GM12878 (cell line): ENCODE measurements at regions of chr10 and their contacts with region 1.

Region 1: GRCh38 chr10:65754100-65754499 is 1171.7 kb upstream of the LRRTM3 start:
- DNase-seq: no peak
- ATAC-seq: no peak
- H3K4me3 ChIP-seq: no peak overlapping the region
- H3K27ac ChIP-seq: no peak overlapping the region
- H3K4me1 ChIP-seq: no peaks in the 10 kb centered on the region
- H3K27me3 ChIP-seq: no peaks in the 10 kb centered on the region
- CTCF ChIP-seq: no peak
- EP300 ChIP-seq: no peak
- POLR2A ChIP-seq: no peak
- RAD21 ChIP-seq: no peak

Region 2: DNA sequence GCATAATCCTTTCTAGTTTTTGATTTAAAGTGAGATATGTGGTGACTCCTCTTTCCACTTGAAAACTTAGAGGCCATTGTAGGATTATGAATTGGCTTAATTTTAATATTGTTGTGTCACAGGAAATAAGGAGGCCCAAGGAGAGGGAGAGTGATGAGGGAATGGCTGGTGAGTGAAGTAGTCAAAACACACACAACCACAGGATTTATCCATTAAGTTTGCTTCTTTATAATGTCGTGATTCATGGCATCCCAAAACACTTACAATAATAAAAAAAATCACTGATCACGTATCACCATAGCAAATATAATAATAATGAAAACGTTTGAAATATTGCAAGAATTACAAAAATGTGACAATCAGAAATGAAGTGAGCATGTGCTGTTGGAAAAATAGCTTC is 43.8 kb before region 1 on chr10:
- CTCF ChIA-PET with region 1: no interaction called
- POLR2A ChIA-PET with region 1: no interaction called
- RAD21 ChIA-PET with region 1: no interaction called
- SMC1A ChIA-PET with region 1: no interaction called
- in situ Hi-C with region 1: no loop called
- intact Hi-C with region 1: no loop called
- DNase-seq: no peak
- ATAC-seq: no peak
- H3K4me3 ChIP-seq: no peak overlapping the region
- H3K27ac ChIP-seq: no peak overlapping the region
- H3K4me1 ChIP-seq: no peaks in the 10 kb centered on the region
- H3K27me3 ChIP-seq: no peaks in the 10 kb centered on the region
- CTCF ChIP-seq: no peak
- EP300 ChIP-seq: no peak
- POLR2A ChIP-seq: no peak
- RAD21 ChIP-seq: no peak

Region 3: DNA sequence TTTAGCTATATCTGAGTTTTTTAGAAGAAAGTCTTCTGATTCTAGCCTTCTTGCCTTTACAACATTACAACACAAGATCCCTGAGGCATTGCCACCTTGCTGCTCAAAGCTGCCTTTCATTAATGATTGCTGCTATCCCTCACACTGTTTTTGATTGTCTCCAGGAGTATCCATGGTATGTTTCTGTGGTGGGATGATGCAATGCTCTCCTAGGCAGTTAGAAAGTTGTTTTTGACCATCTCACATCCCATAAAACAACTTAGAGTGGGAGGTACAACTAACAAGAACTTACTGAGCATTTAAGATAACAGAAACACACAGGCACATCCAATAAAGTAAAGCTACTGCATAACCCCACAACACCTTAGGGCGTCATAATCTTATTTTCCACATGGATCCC is 15.7 kb after region 1 on chr10:
- CTCF ChIA-PET with region 1: interaction called, 12 read pairs
- POLR2A ChIA-PET with region 1: no interaction called
- RAD21 ChIA-PET with region 1: no interaction called
- SMC1A ChIA-PET with region 1: interaction called, 8 read pairs
- in situ Hi-C with region 1: no loop called
- intact Hi-C with region 1: no loop called
- DNase-seq: no peak
- ATAC-seq: no peak
- H3K4me3 ChIP-seq: no peak overlapping the region
- H3K27ac ChIP-seq: no peak overlapping the region
- H3K4me1 ChIP-seq: no peaks in the 10 kb centered on the region
- H3K27me3 ChIP-seq: no peaks in the 10 kb centered on the region
- CTCF ChIP-seq: no peak
- EP300 ChIP-seq: no peak
- POLR2A ChIP-seq: no peak
- RAD21 ChIP-seq: no peak

Region 4: GRCh38 chr10:65864036-65864435 is 109.9 kb after region 1 on chr10:
- CTCF ChIA-PET with region 1: no interaction called
- POLR2A ChIA-PET with region 1: no interaction called
- RAD21 ChIA-PET with region 1: no interaction called
- SMC1A ChIA-PET with region 1: no interaction called
- in situ Hi-C with region 1: no loop called
- intact Hi-C with region 1: no loop called
- DNase-seq: no peak
- ATAC-seq: no peak
- H3K4me3 ChIP-seq: no peak overlapping the region
- H3K27ac ChIP-seq: no peak overlapping the region
- H3K4me1 ChIP-seq: no peaks in the 10 kb centered on the region
- H3K27me3 ChIP-seq: no peaks in the 10 kb centered on the region
- CTCF ChIP-seq: no peak
- EP300 ChIP-seq: no peak
- POLR2A ChIP-seq: no peak
- RAD21 ChIP-seq: no peak